CD4-positive, alpha-beta T cell (primary cell): ENCODE measurements at regions of chr18 and their contacts with region 1.

Region 1: GRCh38 chr18:77108001-77108692 is 24.4 kb downstream of the MBP start:
- DNase-seq: peak in 4 of 14 experiments; percentile 26 to 68 (median 52)
- ATAC-seq: peak; percentile 28
- H3K4me3 ChIP-seq: peak overlapping the region; percentile 1
- H3K4me3 Mint-ChIP-seq: peak overlapping the region; percentile 80
- H3K27ac ChIP-seq: peak overlapping the region; percentile 56 to 76
- H3K27ac Mint-ChIP-seq: peak overlapping the region; percentile 97
- H3K4me1 ChIP-seq: peaks cover 93% of the 10 kb centered on the region
- H3K4me1 Mint-ChIP-seq: peaks cover 92% of the 10 kb centered on the region
- H3K27me3 ChIP-seq: no peaks in the 10 kb centered on the region
- H3K27me3 Mint-ChIP-seq: no peaks in the 10 kb centered on the region
- CTCF ChIP-seq: no peak

Region 2: GRCh38 chr18:77061946-77062517 is 46.1 kb before region 1 on chr18:
- CTCF ChIA-PET with region 1: interaction called, 14 read pairs
- POLR2A ChIA-PET with region 1: interaction called, 25 read pairs
- intact Hi-C with region 1: no loop called
- DNase-seq: peak in 7 of 14 experiments; percentile 24 to 74 (median 52)
- ATAC-seq: peak; percentile 9
- H3K4me3 ChIP-seq: peak overlapping the region; percentile 28
- H3K4me3 Mint-ChIP-seq: peak overlapping the region; percentile 55
- H3K27ac ChIP-seq: peak overlapping the region; percentile 89 to 93
- H3K27ac Mint-ChIP-seq: peak overlapping the region; percentile 98
- H3K4me1 ChIP-seq: peaks cover 91% of the 10 kb centered on the region
- H3K4me1 Mint-ChIP-seq: peaks cover 82% of the 10 kb centered on the region
- H3K27me3 ChIP-seq: no peaks in the 10 kb centered on the region
- H3K27me3 Mint-ChIP-seq: no peaks in the 10 kb centered on the region
- CTCF ChIP-seq: no peak

Region 3: DNA sequence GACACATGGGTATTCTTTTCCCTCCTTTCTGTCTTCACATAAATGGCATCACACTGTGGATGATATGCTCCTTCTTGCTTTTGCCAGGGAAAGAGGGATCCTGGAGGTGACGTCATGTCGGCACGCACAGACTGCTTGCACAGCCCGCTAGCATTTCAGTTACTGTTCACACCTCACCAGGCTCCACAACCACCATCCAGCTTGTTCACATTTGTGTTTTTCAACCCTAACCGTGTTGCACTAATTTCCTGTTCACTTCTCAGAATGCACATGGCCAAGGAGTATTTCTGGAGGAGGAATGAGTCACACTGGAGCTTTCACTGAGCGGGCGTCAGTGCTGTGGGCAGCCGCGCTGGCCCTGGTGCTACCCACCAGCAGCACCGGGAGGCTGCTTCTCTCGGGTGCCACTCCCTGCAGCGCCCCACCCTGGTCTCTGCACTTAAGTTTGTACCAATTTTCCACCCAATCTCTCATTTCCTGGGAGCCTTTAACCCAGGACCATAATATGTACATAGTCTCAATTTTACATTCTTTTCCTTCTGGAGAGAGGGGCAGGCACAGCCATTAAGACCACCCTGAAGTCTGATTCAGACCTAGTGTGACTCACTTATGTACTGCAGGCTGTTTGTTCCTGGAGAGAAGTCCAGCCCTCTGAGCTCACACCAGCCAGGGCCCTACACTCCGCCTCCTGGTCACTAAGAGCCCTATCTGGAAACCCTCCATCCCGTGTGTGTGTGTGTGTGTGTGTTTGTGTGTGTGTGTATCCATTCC is 40.7 kb before region 1 on chr18:
- CTCF ChIA-PET with region 1: interaction called, 14 read pairs
- POLR2A ChIA-PET with region 1: interaction called, 25 read pairs
- intact Hi-C with region 1: loop called in 1 of 2 experiments (anchors 1 kb)
- DNase-seq: peak in 12 of 14 experiments; percentile 52 to 87 (median 62)
- ATAC-seq: peak; percentile 18
- H3K4me3 ChIP-seq: peak overlapping the region; percentile 1
- H3K4me3 Mint-ChIP-seq: peak overlapping the region; percentile 84
- H3K27ac ChIP-seq: peak overlapping the region; percentile 56 to 81
- H3K27ac Mint-ChIP-seq: peak overlapping the region; percentile 98
- H3K4me1 ChIP-seq: peaks cover 96% of the 10 kb centered on the region
- H3K4me1 Mint-ChIP-seq: peaks cover 100% of the 10 kb centered on the region
- H3K27me3 ChIP-seq: no peaks in the 10 kb centered on the region
- H3K27me3 Mint-ChIP-seq: no peaks in the 10 kb centered on the region
- CTCF ChIP-seq: no peak

Region 4: GRCh38 chr18:77124452-77124922 is 16.3 kb after region 1 on chr18:
- CTCF ChIA-PET with region 1: interaction called, 3 read pairs
- POLR2A ChIA-PET with region 1: interaction called, 42 read pairs
- intact Hi-C with region 1: loop called (anchors 1 to 2 kb)
- DNase-seq: peak in 9 of 14 experiments; percentile 40 to 79 (median 55)
- ATAC-seq: peak; percentile 51
- H3K4me3 ChIP-seq: peak overlapping the region; percentile 10
- H3K4me3 Mint-ChIP-seq: peak overlapping the region; percentile 77
- H3K27ac ChIP-seq: peak overlapping the region; percentile 36 to 58
- H3K27ac Mint-ChIP-seq: peak overlapping the region; percentile 83
- H3K4me1 ChIP-seq: peaks cover 58% of the 10 kb centered on the region
- H3K4me1 Mint-ChIP-seq: peaks cover 99% of the 10 kb centered on the region
- H3K27me3 ChIP-seq: no peaks in the 10 kb centered on the region
- H3K27me3 Mint-ChIP-seq: no peaks in the 10 kb centered on the region
- CTCF ChIP-seq: no peak

Region 5: DNA sequence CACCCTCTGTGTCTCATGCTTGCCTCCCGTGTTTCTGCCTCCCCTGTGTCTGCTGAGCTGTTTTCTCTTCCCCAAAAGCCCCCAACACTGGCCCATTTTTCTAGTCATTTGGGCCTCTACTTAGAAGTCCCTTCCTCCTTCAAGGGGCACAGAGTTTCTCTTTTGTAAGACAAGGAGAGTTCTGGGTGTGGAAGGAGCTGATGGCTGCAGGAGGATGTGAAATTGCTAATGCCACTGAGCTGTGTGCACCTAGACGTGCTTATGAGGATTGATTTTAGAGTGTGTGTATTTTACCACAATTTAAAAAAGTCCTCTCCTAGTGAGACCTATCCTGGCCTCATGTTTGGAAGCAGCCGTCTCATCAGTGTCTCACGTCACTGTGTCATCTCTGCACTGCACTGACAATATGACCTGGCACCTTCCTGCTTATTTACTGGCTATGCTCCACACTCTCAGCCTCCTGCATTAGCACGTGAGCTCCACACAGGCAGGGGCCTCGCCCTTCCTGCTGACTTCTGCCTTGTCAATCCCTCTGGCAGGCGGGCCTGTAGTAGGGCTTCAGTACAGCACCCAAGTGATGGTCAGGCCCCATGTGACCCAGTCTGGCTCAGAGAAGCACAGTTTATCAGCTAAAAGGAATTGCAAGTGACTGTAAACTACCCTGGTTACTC is 32.4 kb after region 1 on chr18:
- CTCF ChIA-PET with region 1: no interaction called
- POLR2A ChIA-PET with region 1: interaction called, 11 read pairs
- intact Hi-C with region 1: loop called in 1 of 2 experiments (anchors 5 kb)
- DNase-seq: peak in 13 of 14 experiments; percentile 24 to 83 (median 61)
- ATAC-seq: peak; percentile 98
- H3K4me3 ChIP-seq: no peak overlapping the region
- H3K4me3 Mint-ChIP-seq: peak overlapping the region; percentile 18
- H3K27ac ChIP-seq: peak overlapping the region in 1 of 2 donors; percentile 57
- H3K27ac Mint-ChIP-seq: peak overlapping the region; percentile 88
- H3K4me1 ChIP-seq: peaks cover 29% of the 10 kb centered on the region
- H3K4me1 Mint-ChIP-seq: peaks cover 43% of the 10 kb centered on the region
- H3K27me3 ChIP-seq: no peaks in the 10 kb centered on the region
- H3K27me3 Mint-ChIP-seq: no peaks in the 10 kb centered on the region
- CTCF ChIP-seq: no peak